Calu3 (cell line): ENCODE measurements at regions of chr20 and their contacts with region 1.

Region 1: GRCh38 chr20:44866703-44867335 is 18.7 kb upstream of the YWHAB start:
- DNase-seq: no peak
- H3K4me3 Mint-ChIP-seq: no peak overlapping the region
- H3K27ac Mint-ChIP-seq: no peak overlapping the region
- H3K4me1 Mint-ChIP-seq: peaks cover 8% of the 10 kb centered on the region
- H3K27me3 Mint-ChIP-seq: peaks cover 29% of the 10 kb centered on the region
- CTCF ChIP-seq: no peak

Region 2: DNA sequence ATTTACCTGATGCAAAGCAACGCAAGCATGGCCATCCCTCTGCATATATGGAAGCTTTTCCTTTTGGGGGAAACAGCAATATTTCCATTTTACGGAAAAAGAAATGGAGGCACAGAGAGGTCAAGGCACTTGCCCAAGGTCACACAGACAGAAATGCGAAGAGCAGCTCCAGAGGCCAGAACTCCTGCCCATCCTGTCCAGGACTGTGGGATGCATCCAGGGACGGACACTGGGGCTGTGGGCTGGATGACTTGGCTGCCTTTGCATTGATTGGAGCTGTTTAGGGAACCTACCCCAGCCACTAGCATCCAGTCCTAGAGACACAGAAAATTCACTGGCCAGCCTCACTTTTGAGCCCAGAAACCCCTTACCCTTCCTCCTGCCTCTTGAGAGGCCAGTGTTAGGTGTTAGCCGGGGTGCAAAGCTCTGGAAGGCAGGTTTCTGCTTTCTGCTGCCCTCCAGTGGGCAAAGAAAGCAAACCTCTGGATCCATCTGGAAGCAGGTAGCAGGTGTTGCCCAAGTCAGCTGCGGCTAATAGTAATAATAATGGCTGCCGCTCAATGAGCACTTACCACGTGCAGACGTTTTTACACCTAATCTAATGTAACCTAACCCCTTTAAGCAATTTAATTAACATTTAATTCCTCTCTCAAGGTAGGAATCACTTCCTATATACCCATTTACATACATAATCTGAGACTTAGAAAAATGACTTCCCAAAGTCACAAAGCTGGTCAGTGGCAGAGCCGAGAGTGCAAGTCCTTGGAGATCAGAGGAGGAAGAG is 183.4 kb before region 1 on chr20:
- CTCF ChIA-PET with region 1: interaction called, 14 read pairs
- intact Hi-C with region 1: loop called (anchors 1 kb)
- DNase-seq: peak; percentile 90
- H3K4me3 Mint-ChIP-seq: no peak overlapping the region
- H3K27ac Mint-ChIP-seq: no peak overlapping the region
- H3K4me1 Mint-ChIP-seq: peaks cover 36% of the 10 kb centered on the region
- H3K27me3 Mint-ChIP-seq: no peaks in the 10 kb centered on the region
- CTCF ChIP-seq: peak; percentile 84